GM23248 (cell line): ENCODE measurements at regions of chr16 and their contacts with region 1.

Region 1: GRCh38 chr16:50839920-50840729 is 98.2 kb downstream of the CYLD start:
- DNase-seq: no peak
- H3K4me3 ChIP-seq: no peak overlapping the region
- H3K27ac ChIP-seq: no peak overlapping the region
- H3K4me1 ChIP-seq: no peaks in the 10 kb centered on the region
- H3K27me3 ChIP-seq: peaks cover 15% of the 10 kb centered on the region; the same call in 1 of the 2 replicates

Region 2: DNA sequence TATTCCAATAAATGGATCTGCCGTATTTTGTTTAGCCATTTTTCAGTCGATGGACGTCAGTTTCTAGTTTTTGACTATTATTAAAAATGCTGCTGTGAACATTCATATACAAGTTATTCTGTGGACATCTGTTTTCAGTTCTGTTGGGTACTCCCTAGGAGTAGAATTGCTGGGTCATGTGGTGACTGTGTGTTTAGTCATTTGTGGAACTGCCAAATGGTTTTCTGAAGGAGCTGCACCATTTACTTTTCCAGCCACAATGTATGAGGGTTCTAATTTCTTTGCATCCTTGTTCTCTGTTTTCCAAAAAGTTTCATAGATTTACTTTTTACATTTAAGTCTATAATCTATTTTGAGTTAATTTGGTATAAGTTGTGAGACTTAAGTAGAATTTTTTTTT is 68.8 kb before region 1 on chr16:
- in situ Hi-C with region 1: loop called (anchors 10 kb)
- DNase-seq: peak; percentile 87
- H3K4me3 ChIP-seq: no peak overlapping the region
- H3K27ac ChIP-seq: peak overlapping the region; percentile 88
- H3K4me1 ChIP-seq: peaks cover 14% of the 10 kb centered on the region
- H3K27me3 ChIP-seq: no peaks in the 10 kb centered on the region